Posterior vena cava (tissue), 2 donors: ENCODE measurements at regions of chr12 and their contacts with region 1.

Region 1: DNA sequence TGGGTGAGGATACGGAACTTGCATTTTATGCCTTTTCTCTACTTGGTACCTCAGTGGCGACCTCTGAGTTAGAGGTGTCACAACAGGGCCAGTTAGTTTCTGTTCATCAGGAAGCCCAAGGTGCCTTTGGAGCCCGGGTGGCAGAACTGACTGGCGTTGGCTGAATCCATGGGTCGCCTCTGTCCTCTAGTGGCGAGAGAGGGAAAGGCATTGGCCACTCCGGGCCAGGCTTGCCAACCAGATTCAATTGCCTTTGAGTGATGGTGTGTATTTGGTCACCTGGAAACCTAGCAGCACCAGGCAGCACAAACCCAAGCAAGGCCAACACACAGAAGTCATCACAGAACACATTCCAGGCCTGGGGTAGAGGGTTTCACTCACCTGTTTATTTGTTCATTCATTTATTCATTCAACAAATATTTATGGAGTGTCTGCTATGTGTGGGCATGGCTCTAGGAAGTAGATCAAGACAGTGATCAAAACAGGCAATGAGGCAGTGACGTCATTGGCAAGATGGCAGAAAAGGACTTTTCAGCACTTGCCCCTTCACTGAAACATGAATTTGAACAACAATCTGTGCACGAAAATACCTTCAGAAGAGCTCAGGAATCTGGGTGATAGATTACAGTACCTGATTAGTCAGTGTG is 40.5 kb upstream of the KCNA5 start:
- DNase-seq: peak; percentile 86

Region 2: GRCh38 chr12:4857472-4858291 is 145.5 kb before region 1 on chr12:
- intact Hi-C with region 1: loop called (anchors 2 kb)
- DNase-seq: peak; percentile 87

Region 3: DNA sequence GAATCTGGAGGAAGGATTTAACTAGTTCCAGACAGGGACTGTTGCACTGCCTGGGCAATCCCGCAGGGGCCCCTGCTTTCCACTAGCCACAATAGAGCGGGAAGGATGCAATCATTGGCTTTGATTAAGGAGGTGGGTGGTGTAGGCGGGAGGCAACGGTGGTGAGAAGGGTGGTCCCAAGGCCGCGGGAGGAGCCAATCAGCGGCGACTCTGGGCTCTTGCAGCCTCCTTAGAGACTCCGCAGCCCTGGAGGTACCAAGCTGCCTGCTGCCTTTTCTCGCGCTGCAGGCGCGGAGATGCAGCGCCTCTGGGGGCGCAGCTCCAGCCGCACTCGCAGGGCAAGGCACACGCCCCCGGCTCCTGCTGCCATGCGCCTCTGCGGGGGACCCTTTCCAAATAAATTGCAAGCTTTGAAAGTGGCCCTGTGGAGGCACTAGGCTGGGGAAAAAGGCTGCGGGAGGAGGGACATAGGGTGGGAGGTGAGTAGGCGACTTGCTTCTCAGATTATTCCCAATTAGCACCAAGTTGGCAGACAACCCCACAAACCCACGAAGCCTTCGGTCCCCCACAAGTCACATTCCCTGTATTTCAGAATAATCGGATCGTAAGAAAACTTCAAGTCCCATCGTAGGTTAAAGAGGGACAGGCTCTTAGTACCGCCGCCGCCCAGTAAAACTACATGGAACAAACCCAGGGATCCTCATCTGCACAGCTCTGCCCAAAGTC is 94.3 kb before region 1 on chr12:
- intact Hi-C with region 1: no loop called
- DNase-seq: no peak

Region 4: GRCh38 chr12:5856692-5857091 is 853.5 kb after region 1 on chr12:
- intact Hi-C with region 1: no loop called
- DNase-seq: no peak